PC-9 (cell line): ENCODE measurements at regions of chr7 and their contacts with region 1.

Region 1: DNA sequence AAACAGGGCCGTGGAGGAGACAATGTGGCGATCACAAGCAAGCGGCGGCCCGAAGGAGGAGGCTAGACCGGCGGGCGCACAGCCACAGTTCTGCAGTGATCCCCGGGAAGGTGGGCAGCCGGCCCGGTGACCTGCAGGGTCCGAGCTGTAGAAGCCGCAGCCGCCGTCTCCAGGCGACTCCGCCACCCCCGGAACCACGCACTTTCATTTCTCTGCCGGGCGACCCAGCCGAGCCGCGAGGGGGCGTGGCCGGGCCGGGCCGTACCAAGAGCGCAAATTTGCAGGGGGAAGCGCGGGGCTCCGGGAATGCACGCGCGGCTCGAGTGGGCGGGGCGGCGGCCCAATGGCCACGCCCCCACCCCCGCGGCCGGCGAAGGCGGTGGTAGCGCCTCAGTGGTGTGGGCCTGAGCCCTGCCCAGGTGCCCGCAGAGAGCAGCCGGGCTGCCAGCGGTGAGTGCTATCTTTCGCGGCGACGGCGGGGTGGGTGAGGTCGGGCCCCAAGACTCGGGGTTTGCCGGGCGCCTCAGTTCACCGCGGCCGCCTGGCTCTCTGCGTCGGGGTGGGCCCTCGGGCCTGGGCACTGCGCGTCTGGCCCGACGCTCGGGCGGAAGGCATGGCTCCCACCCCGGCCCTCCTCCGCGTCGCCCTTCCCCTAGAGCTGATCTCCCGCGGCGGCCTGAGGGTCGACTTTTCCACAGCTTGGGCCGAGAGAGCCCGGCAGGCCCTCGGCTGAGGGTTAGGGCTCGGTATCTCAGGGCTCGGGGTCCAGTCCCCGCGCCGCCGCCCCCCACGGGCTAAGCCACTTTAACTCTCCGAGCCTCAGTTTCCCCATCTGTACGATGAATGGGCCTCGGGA is at the start of gene POR:
- DNase-seq: peak; percentile 75 to 99
- H3K4me3 ChIP-seq: peak within 1 kb of the TSS; percentile 68
- H3K27ac ChIP-seq: 0 out of 2 replicates have a peak within 1 kb of the TSS, but pooled peaks have one; percentile 1
- H3K4me1 ChIP-seq: peaks cover 30% of the 10 kb centered on the region
- H3K27me3 ChIP-seq: no peaks in the 10 kb centered on the region
- CTCF ChIP-seq: no peak
- total RNA-seq, gene POR: 151 and 205 TPM in 2 replicates

Region 2: GRCh38 chr7:75866489-75867389 is 48.2 kb before region 1 on chr7:
- CTCF ChIA-PET with region 1: interaction called, 3 read pairs
- POLR2A ChIA-PET with region 1: interaction called, 7 read pairs
- intact Hi-C with region 1: loop called (anchors 1 kb)
- DNase-seq: peak; percentile 45 to 63
- H3K4me3 ChIP-seq: no peak overlapping the region
- H3K27ac ChIP-seq: no peak overlapping the region
- H3K4me1 ChIP-seq: peaks cover 13% of the 10 kb centered on the region
- H3K27me3 ChIP-seq: no peaks in the 10 kb centered on the region
- CTCF ChIP-seq: peak; percentile 90

Region 3: DNA sequence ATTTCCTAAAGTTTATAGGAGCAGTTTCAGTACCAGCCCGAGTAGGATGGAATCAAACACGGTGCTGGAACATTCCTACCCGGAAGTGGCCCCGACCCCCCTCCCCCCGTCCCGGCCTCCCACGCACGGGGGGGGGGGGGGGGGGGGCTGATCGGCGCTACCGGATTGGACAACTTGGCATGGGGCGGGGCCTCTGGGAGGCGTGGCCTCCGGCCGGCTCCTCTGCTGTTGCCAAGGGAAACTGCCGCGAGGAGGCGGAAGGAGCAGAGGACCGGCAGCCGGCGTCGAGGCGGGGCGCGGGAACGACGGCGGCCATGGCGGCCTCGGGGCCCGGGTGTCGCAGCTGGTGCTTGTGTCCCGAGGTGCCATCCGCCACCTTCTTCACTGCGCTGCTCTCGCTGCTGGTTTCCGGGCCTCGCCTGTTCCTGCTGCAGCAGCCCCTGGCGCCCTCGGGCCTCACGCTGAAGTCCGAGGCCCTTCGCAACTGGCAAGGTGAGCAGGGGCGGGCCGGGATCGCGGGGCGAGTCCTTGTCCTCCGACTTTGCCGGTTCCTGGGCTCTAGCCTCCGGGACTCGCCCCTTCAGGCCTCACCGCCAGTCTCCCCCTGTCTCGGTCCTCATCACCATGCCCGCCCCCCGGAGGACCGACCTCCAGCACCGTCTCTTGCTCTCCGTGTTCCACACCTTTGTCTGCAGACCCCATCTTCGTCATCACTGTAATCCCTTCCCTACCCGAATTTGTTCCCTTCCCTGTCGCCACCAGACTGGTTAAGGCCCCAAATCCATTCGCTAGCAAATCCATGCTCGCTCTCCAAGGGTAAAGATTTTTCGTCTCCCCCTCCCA is 36.0 kb before region 1 on chr7 and contains the start of gene RHBDD2:
- CTCF ChIA-PET with region 1: interaction called, 10 read pairs
- POLR2A ChIA-PET with region 1: interaction called, 4 read pairs
- intact Hi-C with region 1: loop called (anchors 1 kb)
- DNase-seq: peak; percentile 76 to 94
- H3K4me3 ChIP-seq: peak within 1 kb of the TSS; percentile 89
- H3K27ac ChIP-seq: no peak within 1 kb of the TSS
- H3K4me1 ChIP-seq: peaks cover 13% of the 10 kb centered on the region
- H3K27me3 ChIP-seq: no peaks in the 10 kb centered on the region
- CTCF ChIP-seq: no peak
- total RNA-seq, gene RHBDD2: 71.7 and 75.6 TPM in 2 replicates

Region 4: DNA sequence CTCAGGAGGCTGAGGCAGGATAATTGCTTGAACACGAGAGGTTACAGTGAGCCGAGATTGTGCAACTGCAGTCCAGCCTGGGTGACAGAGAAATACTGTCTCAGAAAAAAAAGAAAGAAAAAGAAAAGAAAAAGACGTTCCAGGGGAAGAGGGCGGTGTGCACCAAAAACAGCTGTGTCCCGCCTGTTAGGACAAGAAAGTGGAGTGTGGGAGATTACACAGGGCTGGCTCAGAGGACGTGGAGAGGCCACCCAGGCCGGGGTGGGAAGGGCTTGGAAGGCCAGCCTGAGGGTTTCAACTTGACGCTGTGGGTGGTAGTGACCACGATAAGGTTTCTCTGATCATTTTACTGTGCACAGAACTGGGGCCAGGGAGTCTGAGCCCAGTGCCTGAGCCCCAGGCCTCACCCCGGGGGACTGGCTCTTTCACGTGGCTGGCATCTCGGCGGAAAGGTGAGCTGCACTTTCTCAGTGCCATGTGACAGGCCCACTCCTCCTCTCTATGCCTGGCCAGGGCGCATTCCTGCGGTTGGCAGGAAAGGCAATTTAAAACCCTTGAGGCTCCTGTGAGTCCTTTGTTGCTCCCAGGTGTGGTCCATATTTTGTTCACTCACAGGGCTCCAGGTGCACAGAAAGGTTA is 22.2 kb before region 1 on chr7:
- CTCF ChIA-PET with region 1: no interaction called
- POLR2A ChIA-PET with region 1: interaction called, 4 read pairs
- intact Hi-C with region 1: loop called (anchors 2 kb)
- DNase-seq: peak; percentile 94 to 95
- H3K4me3 ChIP-seq: no peak overlapping the region
- H3K27ac ChIP-seq: peak overlapping the region; percentile 92
- H3K4me1 ChIP-seq: peaks cover 43% of the 10 kb centered on the region
- H3K27me3 ChIP-seq: no peaks in the 10 kb centered on the region
- CTCF ChIP-seq: no peak

Region 5: GRCh38 chr7:75925717-75926435 is 10.9 kb after region 1 on chr7:
- CTCF ChIA-PET with region 1: interaction called, 3 read pairs
- POLR2A ChIA-PET with region 1: interaction called, 16 read pairs
- intact Hi-C with region 1: no loop called
- DNase-seq: no peak
- H3K4me3 ChIP-seq: no peak overlapping the region
- H3K27ac ChIP-seq: no peak overlapping the region
- H3K4me1 ChIP-seq: no peaks in the 10 kb centered on the region
- H3K27me3 ChIP-seq: no peaks in the 10 kb centered on the region
- CTCF ChIP-seq: no peak

Region 6: DNA sequence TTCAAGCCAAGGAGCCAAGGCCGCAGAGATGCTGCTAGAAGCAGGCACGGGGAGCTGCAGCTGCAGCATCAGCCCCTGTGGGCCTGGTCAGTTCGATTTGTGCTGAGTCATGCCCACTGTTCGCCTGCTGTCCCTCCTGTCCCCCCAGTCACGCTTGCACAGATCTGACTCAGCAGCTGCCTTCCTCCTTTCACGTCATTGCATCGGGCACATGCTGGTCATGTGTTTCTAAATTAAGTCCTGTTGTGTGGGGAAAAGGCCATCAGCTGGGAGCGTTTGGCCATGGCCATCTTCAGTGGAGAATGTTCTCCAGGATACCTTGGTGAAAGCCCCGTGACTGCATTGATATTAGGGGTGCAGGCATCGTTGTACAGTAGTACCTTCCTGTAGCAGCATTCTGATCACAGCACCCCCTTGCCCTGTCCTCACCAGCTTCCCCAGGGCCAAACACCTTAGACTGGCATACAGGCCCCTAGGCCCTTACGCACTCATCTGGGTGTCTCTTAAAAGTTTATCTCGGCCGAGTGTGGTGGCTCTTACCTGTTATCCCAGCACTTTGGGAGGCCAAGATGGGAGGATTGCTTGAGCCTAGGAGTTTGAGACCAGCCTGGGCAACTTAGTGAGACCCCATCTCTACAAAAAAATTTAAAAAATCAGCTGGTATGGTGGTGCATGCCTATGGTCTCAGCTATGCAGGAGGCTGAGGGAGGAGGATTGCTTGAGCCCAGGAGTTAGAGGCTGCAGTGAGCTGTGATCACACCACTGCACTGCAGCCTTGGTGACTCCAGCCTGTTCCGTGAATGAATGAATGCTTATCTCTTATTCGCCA is 23.2 kb after region 1 on chr7:
- CTCF ChIA-PET with region 1: no interaction called
- POLR2A ChIA-PET with region 1: no interaction called
- intact Hi-C with region 1: no loop called
- DNase-seq: peak in 1 of 2 experiments; percentile 68
- H3K4me3 ChIP-seq: no peak overlapping the region
- H3K27ac ChIP-seq: peak overlapping the region; percentile 58
- H3K4me1 ChIP-seq: peaks cover 12% of the 10 kb centered on the region
- H3K27me3 ChIP-seq: no peaks in the 10 kb centered on the region
- CTCF ChIP-seq: no peak

Region 7: DNA sequence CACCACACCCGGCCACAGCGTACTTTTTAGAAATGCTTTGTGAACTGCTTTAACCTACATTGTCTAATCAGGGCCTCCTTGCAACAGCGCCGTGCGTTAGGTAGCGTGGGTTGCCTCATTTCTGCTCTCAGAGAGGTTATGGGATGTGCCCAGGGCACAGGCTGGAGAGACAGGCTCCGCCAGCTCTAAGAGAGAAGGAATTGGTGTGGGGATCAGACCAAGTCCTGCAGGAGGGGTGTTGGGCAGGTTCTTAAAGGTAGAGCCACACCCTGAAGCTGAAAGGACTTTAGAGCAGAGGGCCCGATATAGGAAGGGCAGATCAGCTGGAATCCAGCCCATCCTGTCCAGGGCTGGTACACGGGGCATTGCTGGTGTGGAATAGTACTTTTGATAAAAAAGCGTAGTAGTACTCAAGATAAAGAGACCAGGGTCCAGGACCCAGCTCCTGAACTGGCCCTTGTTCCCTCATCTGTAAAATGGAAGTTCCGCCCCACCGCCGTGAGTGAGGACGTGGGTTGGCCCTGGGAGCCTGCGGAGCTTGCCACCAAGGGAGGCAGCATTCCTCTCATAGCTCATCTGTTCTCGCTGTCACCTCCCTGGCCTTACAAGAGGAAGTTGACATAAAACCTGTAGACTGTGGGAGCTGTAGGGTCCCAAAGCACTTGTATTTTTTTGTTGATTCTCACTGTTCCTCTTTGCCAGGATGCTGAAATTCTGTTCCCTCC is 42.2 kb after region 1 on chr7:
- CTCF ChIA-PET with region 1: interaction called, 5 read pairs
- POLR2A ChIA-PET with region 1: interaction called, 4 read pairs
- intact Hi-C with region 1: loop called (anchors 2 kb)
- DNase-seq: peak; percentile 94 to 99
- H3K4me3 ChIP-seq: peak overlapping the region; percentile 36; the same call in 1 of the 2 replicates
- H3K27ac ChIP-seq: peak overlapping the region; percentile 76
- H3K4me1 ChIP-seq: peaks cover 40% of the 10 kb centered on the region
- H3K27me3 ChIP-seq: no peaks in the 10 kb centered on the region
- CTCF ChIP-seq: no peak

Region 8: DNA sequence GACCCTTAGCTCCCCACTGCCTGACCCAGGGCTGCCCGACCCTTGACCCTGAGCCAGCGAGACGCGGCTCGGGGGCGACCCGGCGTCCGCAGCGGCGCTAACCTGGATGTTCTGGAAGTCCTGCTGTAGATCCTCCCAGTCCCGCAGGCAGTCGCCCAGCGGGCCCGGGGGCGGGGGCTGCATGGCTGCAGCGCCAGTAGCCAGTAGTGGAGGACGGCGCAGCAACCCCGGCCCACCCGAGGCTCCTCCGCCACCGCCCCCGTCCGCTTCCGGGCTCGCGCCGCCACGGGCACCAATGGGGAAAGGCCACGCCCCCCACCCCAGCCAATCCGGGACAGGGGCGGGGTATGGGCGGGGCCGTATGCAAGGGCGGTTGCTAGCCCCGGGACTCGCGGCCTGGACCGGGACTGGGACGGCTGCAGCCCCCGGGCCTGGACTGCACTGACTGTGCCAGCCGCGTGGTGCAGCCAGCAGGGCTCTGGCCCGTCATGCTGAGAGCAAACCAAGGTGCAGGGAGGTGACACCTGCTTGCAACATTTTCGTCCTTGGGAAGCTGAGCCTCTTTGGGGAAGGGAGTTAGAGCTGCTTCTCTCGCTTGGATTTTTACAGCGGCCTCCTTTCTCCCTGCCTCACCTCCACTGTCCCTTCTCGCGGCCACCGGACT is 79.6 kb after region 1 on chr7 and contains the start of gene TMEM120A:
- CTCF ChIA-PET with region 1: no interaction called
- POLR2A ChIA-PET with region 1: no interaction called
- intact Hi-C with region 1: loop called (anchors 2 kb)
- DNase-seq: peak; percentile 79 to 98
- H3K4me3 ChIP-seq: peak within 1 kb of the TSS; percentile 92
- H3K27ac ChIP-seq: no peak within 1 kb of the TSS
- H3K4me1 ChIP-seq: peaks cover 27% of the 10 kb centered on the region
- H3K27me3 ChIP-seq: no peaks in the 10 kb centered on the region
- CTCF ChIP-seq: 0 out of 2 replicates have a peak, but pooled peaks have one; percentile 16
- total RNA-seq, gene TMEM120A: 26.9 and 27.0 TPM in 2 replicates

Region 9: GRCh38 chr7:76020031-76020714 is 105.2 kb after region 1 on chr7:
- CTCF ChIA-PET with region 1: no interaction called
- POLR2A ChIA-PET with region 1: no interaction called
- intact Hi-C with region 1: no loop called
- DNase-seq: peak; percentile 51 to 78
- H3K4me3 ChIP-seq: no peak overlapping the region
- H3K27ac ChIP-seq: no peak overlapping the region
- H3K4me1 ChIP-seq: no peaks in the 10 kb centered on the region
- H3K27me3 ChIP-seq: no peaks in the 10 kb centered on the region
- CTCF ChIP-seq: peak; percentile 88